ENCODE measurements at regions of chr14 and their contacts with region 1.

Region 1: DNA sequence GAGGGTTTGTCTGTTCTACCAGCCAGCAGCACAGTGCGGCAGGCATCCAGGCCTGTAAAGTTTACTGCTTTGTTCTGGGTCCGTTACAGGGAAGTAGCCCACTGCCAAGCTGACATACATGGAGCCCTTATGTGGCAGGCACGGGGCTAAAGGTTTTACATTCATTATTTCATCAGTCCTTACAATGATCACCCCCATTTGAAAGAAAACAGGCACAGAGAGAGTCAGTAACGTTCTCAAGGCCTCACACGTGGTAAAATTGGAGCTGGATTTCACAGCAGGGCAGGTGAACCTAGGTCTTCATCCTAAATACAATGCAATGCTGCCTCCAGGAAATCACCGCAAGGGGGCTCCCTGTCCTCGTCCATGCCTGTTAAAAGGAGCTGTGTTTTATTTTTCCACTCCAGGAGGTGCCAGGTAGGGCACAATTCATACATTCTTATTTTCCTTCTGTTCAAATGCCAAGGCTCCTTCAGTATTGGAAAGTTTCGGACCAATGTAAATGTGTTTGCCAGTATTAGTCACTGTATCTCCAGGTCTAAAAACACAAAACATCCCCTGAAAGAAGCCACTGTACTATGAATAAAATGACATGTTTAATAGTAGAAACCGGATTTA is 172.2 kb upstream of the GZMB start:
- DNase-seq: peak; percentile 88
- H3K4me3 Mint-ChIP-seq: no peak overlapping the region
- H3K27ac Mint-ChIP-seq: peak overlapping the region; percentile 30
- H3K4me1 Mint-ChIP-seq: peaks cover 51% of the 10 kb centered on the region
- H3K27me3 Mint-ChIP-seq: no peaks in the 10 kb centered on the region
- CTCF ChIP-seq: peak; percentile 82

Region 2: DNA sequence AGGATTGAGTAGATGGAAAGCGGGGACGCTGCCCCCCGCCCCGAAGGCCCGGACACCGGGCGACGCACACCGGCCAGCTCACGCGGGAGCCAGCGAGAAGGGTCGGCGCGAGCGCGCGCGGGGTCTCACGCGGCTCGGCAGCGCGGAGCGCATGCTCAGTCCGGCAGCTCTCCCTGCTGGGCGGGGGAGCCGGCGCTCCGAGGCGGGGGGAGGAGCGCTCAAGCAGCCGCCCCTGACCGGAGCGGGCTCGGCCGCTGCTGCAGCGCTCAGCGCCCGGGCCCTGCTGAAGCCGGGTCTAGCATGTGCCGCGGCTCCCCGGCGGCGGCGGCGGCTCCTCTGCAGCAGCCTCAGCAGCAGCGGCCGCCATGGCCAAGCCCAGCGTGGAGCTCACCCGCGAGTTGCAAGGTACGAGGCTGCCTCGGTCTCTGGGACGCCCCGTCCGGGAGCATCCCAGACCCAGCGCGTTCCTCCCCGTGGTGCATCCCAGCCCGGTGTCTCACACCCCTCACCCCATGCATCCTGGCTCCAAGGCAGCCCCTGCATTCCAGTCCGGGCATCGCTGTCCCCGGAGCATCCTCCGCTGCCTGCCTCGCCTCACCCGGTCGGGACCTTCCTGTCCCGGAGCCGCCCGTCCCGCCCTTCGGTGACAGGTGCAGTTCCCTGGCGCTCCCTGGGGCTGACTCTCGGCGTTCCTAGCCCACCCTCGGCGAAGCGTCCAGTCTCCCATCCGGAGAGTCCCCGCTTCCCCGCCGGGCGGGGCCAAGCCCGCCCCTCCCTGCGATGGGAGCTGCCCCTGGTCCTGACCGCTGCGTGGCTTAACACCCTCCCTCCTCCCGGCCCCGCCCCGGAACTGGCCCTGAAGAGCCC is 754.1 kb before region 1 on chr14 and contains the start of gene CARMIL3:
- CTCF ChIA-PET with region 1: no interaction called
- intact Hi-C with region 1: no loop called
- DNase-seq: peak; percentile 61
- H3K4me3 Mint-ChIP-seq: peak within 1 kb of the TSS; percentile 70
- H3K27ac Mint-ChIP-seq: no peak within 1 kb of the TSS
- H3K4me1 Mint-ChIP-seq: peaks cover 11% of the 10 kb centered on the region
- H3K27me3 Mint-ChIP-seq: peaks cover 88% of the 10 kb centered on the region
- CTCF ChIP-seq: no peak
- total RNA-seq, gene CARMIL3: 0.33 and 0.42 TPM in 2 replicates

Region 3: DNA sequence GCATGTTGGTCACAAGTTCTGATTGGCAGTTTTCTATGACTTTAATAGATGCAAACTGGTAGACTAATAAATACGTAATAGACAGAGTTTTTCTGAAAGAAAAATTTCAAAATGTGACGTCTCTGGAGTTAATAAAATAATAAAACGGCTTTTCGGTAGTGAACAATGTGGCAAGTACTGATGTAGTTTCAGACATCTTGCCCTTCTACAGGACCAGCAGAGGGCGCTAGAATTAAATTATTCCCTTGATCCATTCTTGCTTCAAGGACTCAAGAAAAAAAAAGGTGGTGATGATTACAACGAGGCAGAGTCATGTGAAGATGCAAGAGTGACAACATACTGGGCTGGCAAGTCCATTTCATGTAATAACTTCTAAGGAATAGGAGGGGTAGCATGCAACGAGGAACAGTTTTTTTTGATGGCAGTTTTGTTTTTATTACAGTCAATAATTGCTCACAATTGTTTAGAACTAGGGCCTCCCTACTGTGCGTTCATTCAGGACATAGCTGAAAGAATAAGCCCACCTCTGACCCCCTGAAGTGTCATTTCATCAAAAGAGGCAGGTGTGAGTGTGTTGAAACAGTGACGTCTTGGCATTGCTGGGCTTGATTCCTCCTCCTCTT is 71.2 kb before region 1 on chr14:
- CTCF ChIA-PET with region 1: no interaction called
- intact Hi-C with region 1: loop called (anchors 1 kb)
- DNase-seq: peak; percentile 51
- H3K4me3 Mint-ChIP-seq: no peak overlapping the region
- H3K27ac Mint-ChIP-seq: no peak overlapping the region
- H3K4me1 Mint-ChIP-seq: no peaks in the 10 kb centered on the region
- H3K27me3 Mint-ChIP-seq: peaks cover 28% of the 10 kb centered on the region
- CTCF ChIP-seq: no peak

Region 4: DNA sequence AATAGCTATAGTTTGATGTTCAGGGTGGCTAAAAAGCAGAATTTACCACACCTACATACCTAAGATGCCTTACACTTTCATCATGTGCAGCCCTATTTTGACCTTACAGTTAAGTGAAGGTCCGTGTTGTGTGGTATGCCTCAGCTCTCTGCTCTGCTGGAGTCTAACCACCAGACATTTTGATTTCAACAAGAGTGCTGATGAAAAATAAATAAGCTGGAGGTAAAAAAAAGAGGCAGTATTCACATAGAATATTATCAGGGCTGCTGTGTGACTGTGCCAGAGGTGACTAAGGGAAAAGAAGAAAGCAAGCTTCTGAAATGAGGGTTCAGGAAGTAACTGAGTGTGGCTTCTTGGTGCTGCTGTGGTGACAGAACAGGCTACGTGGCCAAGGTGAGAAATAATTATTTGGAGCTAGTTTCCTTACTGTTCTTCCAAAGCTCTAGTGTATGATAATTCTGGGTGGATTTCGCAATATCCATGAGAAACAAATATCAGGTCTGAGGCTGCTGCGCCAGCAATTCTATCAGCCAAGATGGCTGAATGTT is 55.0 kb after region 1 on chr14:
- CTCF ChIA-PET with region 1: interaction called, 11 read pairs
- intact Hi-C with region 1: no loop called
- DNase-seq: peak; percentile 33
- H3K4me3 Mint-ChIP-seq: peak overlapping the region; percentile 71
- H3K27ac Mint-ChIP-seq: peak overlapping the region; percentile 98
- H3K4me1 Mint-ChIP-seq: peaks cover 30% of the 10 kb centered on the region
- H3K27me3 Mint-ChIP-seq: no peaks in the 10 kb centered on the region
- CTCF ChIP-seq: no peak

Region 5: GRCh38 chr14:24887623-24888293 is 81.6 kb after region 1 on chr14:
- CTCF ChIA-PET with region 1: no interaction called
- intact Hi-C with region 1: no loop called
- DNase-seq: no peak
- H3K4me3 Mint-ChIP-seq: no peak overlapping the region
- H3K27ac Mint-ChIP-seq: no peak overlapping the region
- H3K4me1 Mint-ChIP-seq: peaks cover 20% of the 10 kb centered on the region
- H3K27me3 Mint-ChIP-seq: no peaks in the 10 kb centered on the region
- CTCF ChIP-seq: no peak

Region 6: GRCh38 chr14:25049568-25050268 is 243.5 kb after region 1 on chr14 and contains the start of gene STXBP6:
- CTCF ChIA-PET with region 1: no interaction called
- intact Hi-C with region 1: loop called (anchors 5 kb)
- DNase-seq: peak; percentile 73
- H3K4me3 Mint-ChIP-seq: peak within 1 kb of the TSS; percentile 75
- H3K27ac Mint-ChIP-seq: peak within 1 kb of the TSS; percentile 34
- H3K4me1 Mint-ChIP-seq: peaks cover 8% of the 10 kb centered on the region
- H3K27me3 Mint-ChIP-seq: no peaks in the 10 kb centered on the region
- CTCF ChIP-seq: no peak
- total RNA-seq, gene STXBP6: 6.4 and 7.9 TPM in 2 replicates

Region 7: DNA sequence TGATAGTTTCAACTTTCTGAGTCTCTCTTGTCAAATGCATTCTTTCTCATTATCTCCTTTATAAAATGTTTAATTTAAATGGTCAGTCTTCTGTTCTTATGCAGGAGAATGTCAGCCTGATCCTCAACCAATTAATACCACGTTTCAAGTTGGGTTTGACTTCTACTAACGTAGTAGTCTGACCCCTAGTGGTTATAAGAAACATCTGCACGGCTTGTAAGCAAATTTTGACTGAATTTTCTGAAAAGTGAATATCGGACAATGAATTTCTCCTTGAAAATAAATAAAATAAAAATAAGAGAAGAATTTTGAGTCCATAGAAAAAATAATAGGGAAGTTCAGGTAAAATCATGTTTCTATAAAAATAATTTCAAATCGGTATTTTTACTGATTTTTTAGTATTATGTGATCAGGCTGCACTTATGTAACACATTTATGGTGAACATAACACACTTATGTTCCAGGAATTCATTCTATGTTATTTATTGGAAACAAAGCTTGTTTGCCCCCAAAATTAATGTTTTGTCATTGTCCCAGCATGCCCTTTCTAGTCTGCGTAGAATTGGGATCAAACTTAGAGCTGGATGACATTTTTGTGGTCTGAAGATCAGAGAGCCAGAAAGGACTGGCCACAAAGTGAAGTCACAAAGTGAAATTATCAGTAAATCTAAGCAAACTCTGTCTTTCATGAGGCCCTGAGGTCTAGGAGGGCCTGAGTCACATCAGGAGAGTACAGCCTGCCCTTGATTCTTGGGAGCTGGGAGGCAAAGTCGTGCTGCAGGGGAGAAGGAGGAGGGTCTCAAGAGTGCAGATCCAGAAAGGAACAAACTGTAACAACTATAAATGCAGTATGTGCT is 345.0 kb after region 1 on chr14:
- CTCF ChIA-PET with region 1: interaction called, 7 read pairs
- intact Hi-C with region 1: loop called (anchors 1 kb)
- DNase-seq: no peak
- H3K4me3 Mint-ChIP-seq: no peak overlapping the region
- H3K27ac Mint-ChIP-seq: no peak overlapping the region
- H3K4me1 Mint-ChIP-seq: peaks cover 5% of the 10 kb centered on the region
- H3K27me3 Mint-ChIP-seq: peaks cover 18% of the 10 kb centered on the region
- CTCF ChIP-seq: peak; percentile 21